ENCODE measurements at regions of chr6 and their contacts with region 1.

Region 1: GRCh38 chr6:26249957-26250697 is 114.9 kb upstream of the BTN3A2 start:
- DNase-seq: peak; percentile 81 to 84
- H3K4me3 ChIP-seq: peak overlapping the region; percentile 97
- H3K4me3 Mint-ChIP-seq: peak overlapping the region; percentile 71
- H3K27ac Mint-ChIP-seq: peak overlapping the region; percentile 71
- H3K4me1 ChIP-seq: peaks cover 10% of the 10 kb centered on the region; the same call in 1 of the 2 replicates
- H3K4me1 Mint-ChIP-seq: peaks cover 13% of the 10 kb centered on the region
- H3K27me3 ChIP-seq: no peaks in the 10 kb centered on the region
- H3K27me3 Mint-ChIP-seq: peaks cover 3% of the 10 kb centered on the region
- CTCF ChIP-seq: peak in 1 of 2 experiments; percentile 42

Region 2: GRCh38 chr6:26156076-26156849 is 93.9 kb before region 1 on chr6:
- CTCF ChIA-PET with region 1: no interaction called
- POLR2A ChIA-PET with region 1: interaction called, 28 read pairs
- intact Hi-C with region 1: no loop called
- DNase-seq: peak; percentile 86 to 93
- H3K4me3 ChIP-seq: peak overlapping the region; percentile 64
- H3K4me3 Mint-ChIP-seq: peak overlapping the region; percentile 86
- H3K27ac Mint-ChIP-seq: peak overlapping the region; percentile 98
- H3K4me1 ChIP-seq: peaks cover 10% of the 10 kb centered on the region
- H3K4me1 Mint-ChIP-seq: peaks cover 45% of the 10 kb centered on the region
- H3K27me3 ChIP-seq: no peaks in the 10 kb centered on the region
- H3K27me3 Mint-ChIP-seq: peaks cover 15% of the 10 kb centered on the region
- CTCF ChIP-seq: no peak

Region 3: GRCh38 chr6:26223650-26224546 is 26.2 kb before region 1 on chr6:
- CTCF ChIA-PET with region 1: no interaction called
- POLR2A ChIA-PET with region 1: interaction called, 37 read pairs
- intact Hi-C with region 1: loop called (anchors 1 kb)
- DNase-seq: peak; percentile 63 to 69
- H3K4me3 ChIP-seq: peak overlapping the region; percentile 55
- H3K4me3 Mint-ChIP-seq: no peak overlapping the region
- H3K27ac Mint-ChIP-seq: no peak overlapping the region
- H3K4me1 ChIP-seq: 0 out of 2 replicates have a peak, but pooled peaks cover 8% of the 10 kb centered on the region
- H3K4me1 Mint-ChIP-seq: no peaks in the 10 kb centered on the region
- H3K27me3 ChIP-seq: no peaks in the 10 kb centered on the region
- H3K27me3 Mint-ChIP-seq: no peaks in the 10 kb centered on the region
- CTCF ChIP-seq: no peak

Region 4: DNA sequence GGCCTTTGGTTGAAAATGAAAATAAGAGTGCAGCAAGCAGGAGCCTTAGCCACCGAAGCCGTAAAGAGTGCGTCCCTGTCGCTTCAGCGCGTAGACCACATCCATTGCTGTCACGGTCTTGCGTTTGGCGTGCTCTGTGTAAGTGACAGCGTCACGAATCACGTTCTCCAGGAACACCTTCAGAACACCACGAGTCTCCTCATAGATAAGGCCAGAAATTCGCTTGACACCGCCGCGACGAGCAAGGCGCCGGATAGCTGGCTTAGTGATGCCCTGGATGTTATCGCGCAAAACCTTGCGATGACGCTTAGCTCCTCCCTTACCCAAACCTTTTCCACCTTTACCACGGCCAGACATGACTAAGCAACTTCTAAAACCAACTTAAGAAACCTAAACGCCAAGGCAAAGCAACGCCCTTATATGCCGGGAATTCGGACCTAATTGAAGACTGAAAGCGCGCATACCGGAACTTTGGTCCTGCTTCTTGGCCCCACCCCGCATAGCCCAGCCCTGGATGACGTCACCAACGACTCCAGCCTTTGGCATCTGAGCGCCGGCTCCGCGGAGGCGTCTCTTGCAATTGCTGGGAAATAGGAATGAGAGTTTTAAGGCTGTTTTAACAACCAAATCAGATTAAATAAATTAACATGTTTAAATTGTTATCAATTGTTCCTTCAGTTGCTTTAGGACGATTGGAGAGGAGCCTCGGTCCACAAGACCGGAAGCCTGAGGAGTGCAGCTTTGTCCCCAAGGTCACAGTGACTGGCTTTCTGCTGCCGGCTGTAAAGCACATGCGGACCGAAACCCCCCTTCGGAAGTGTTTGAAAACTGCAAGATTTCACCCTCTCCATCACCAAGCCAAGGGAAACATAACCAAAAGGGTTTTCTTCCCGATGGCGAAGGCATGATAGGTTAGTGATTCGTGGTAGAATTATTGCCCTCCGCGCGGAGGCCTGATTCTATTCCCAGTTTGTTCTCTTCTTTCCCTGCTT is 35.3 kb after region 1 on chr6:
- CTCF ChIA-PET with region 1: no interaction called
- POLR2A ChIA-PET with region 1: interaction called, 18 read pairs
- intact Hi-C with region 1: loop called (anchors 1 kb)
- DNase-seq: peak; percentile 97 to 99
- H3K4me3 ChIP-seq: peak overlapping the region; percentile 55
- H3K4me3 Mint-ChIP-seq: peak overlapping the region; percentile 82
- H3K27ac Mint-ChIP-seq: peak overlapping the region; percentile 100
- H3K4me1 ChIP-seq: no peaks in the 10 kb centered on the region
- H3K4me1 Mint-ChIP-seq: peaks cover 17% of the 10 kb centered on the region
- H3K27me3 ChIP-seq: no peaks in the 10 kb centered on the region
- H3K27me3 Mint-ChIP-seq: peaks cover 6% of the 10 kb centered on the region
- CTCF ChIP-seq: no peak

Region 5: GRCh38 chr6:26537846-26538571 is 287.9 kb after region 1 on chr6 and contains the start of gene HMGN4:
- CTCF ChIA-PET with region 1: no interaction called
- POLR2A ChIA-PET with region 1: no interaction called
- intact Hi-C with region 1: no loop called
- DNase-seq: peak; percentile 85 to 90
- H3K4me3 ChIP-seq: peak within 1 kb of the TSS; percentile 65
- H3K4me3 Mint-ChIP-seq: peak within 1 kb of the TSS; percentile 89
- H3K27ac Mint-ChIP-seq: peak within 1 kb of the TSS; percentile 97
- H3K4me1 ChIP-seq: peaks cover 4% of the 10 kb centered on the region; the same call in 1 of the 2 replicates
- H3K4me1 Mint-ChIP-seq: peaks cover 15% of the 10 kb centered on the region
- H3K27me3 ChIP-seq: no peaks in the 10 kb centered on the region
- H3K27me3 Mint-ChIP-seq: peaks cover 2% of the 10 kb centered on the region
- CTCF ChIP-seq: no peak
- total RNA-seq, gene HMGN4: 29.6 and 30.8 TPM in 2 replicates